CD8-positive, alpha-beta T cell (primary cell): ENCODE measurements at regions of chr7 and their contacts with region 1.

Region 1: GRCh38 chr7:72435366-72435765 is 23.2 kb upstream of the CALN1 start:
- DNase-seq: no peak
- ATAC-seq: no peak
- H3K4me3 ChIP-seq: no peak overlapping the region
- H3K4me3 Mint-ChIP-seq: no peak overlapping the region
- H3K27ac ChIP-seq: no peak overlapping the region
- H3K27ac Mint-ChIP-seq: no peak overlapping the region
- H3K4me1 ChIP-seq: no peaks in the 10 kb centered on the region
- H3K4me1 Mint-ChIP-seq: no peaks in the 10 kb centered on the region
- H3K27me3 ChIP-seq: no peaks in the 10 kb centered on the region
- H3K27me3 Mint-ChIP-seq: peaks cover 2% of the 10 kb centered on the region
- CTCF ChIP-seq: no peak

Region 2: DNA sequence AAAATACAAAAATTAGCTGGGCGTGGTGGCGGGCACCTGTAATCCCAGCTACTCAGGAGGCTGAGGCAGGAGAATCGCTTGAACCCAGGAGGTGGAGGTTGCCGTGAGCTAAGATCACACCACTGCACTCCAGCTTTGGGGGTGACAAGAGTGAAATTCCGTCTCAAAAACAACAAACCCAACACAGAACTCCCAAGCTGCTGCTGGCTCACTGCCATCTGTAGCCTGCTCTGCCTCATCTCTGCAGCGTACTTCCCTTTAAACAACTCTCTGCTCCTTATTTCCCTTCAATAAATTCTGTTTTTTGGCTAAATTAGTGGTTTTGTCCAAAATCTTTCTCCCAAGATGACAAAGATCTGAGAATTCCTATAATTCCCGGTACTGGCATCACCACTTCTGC is 1492.6 kb before region 1 on chr7:
- CTCF ChIA-PET with region 1: no interaction called
- POLR2A ChIA-PET with region 1: no interaction called
- intact Hi-C with region 1: loop called in 1 of 2 experiments (anchors 10 kb)
- DNase-seq: no peak
- ATAC-seq: no peak
- H3K4me3 ChIP-seq: no peak overlapping the region
- H3K4me3 Mint-ChIP-seq: no peak overlapping the region
- H3K27ac ChIP-seq: no peak overlapping the region
- H3K27ac Mint-ChIP-seq: no peak overlapping the region
- H3K4me1 ChIP-seq: no peaks in the 10 kb centered on the region
- H3K4me1 Mint-ChIP-seq: no peaks in the 10 kb centered on the region
- H3K27me3 ChIP-seq: no peaks in the 10 kb centered on the region
- H3K27me3 Mint-ChIP-seq: no peaks in the 10 kb centered on the region
- CTCF ChIP-seq: no peak

Region 3: GRCh38 chr7:71716690-71717089 is 718.7 kb before region 1 on chr7:
- CTCF ChIA-PET with region 1: no interaction called
- POLR2A ChIA-PET with region 1: no interaction called
- intact Hi-C with region 1: no loop called
- DNase-seq: no peak
- ATAC-seq: no peak
- H3K4me3 ChIP-seq: no peak overlapping the region
- H3K4me3 Mint-ChIP-seq: no peak overlapping the region
- H3K27ac ChIP-seq: no peak overlapping the region
- H3K27ac Mint-ChIP-seq: no peak overlapping the region
- H3K4me1 ChIP-seq: no peaks in the 10 kb centered on the region
- H3K4me1 Mint-ChIP-seq: no peaks in the 10 kb centered on the region
- H3K27me3 ChIP-seq: no peaks in the 10 kb centered on the region
- H3K27me3 Mint-ChIP-seq: peaks cover 3% of the 10 kb centered on the region
- CTCF ChIP-seq: no peak